CD4-positive, alpha-beta T cell (primary cell): ENCODE measurements at regions of chr20 and their contacts with region 1.

Region 1: DNA sequence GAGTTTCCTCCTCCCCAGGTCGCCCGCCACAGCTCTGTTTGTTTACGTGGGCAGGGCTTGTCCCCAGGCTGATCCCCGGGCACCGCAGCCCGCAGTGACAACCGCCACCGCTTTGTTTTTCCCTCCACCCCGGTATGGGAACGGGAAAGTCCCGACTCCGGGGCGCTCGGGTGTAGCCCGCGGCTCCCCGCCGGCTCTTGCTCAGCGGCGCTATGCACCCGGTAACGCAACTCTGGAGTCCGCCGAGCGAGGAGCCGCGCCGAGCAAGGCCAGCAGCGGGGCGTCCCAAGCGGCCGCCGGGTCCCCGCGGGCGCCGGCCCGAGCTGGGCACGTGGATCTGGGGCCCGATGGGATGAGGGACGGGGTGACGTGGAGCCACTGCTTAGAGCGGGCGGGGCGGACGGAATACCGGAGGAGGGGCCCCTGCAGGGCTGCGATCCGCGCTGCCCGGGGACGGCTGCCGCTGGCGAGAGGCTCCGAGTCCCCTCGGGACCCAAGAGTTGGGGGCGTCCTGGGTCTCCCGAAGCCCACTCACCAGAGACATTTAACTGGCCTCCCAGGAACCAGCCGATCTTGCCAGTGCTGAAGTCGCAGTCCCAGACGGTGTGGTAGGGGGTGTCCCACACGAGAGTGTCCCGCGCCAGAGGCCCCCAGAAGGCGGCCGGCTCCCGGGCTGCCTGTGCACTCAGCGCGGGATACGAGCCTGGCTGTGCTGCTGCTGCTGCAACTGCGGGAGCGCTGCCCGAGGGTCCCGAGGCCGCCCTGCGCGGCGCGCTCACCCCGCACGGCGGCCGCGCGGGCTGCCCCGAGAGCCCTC is 497 bp downstream of the ACSS1 start:
- DNase-seq: peak; percentile 45 to 94 (median 71)
- ATAC-seq: peak; percentile 45
- H3K4me3 ChIP-seq: peak overlapping the region; percentile 94
- H3K4me3 Mint-ChIP-seq: peak overlapping the region; percentile 88
- H3K27ac ChIP-seq: peak overlapping the region; percentile 86 to 89
- H3K27ac Mint-ChIP-seq: peak overlapping the region; percentile 88
- H3K4me1 ChIP-seq: peaks cover 55% of the 10 kb centered on the region
- H3K4me1 Mint-ChIP-seq: peaks cover 63% of the 10 kb centered on the region
- H3K27me3 ChIP-seq: no peaks in the 10 kb centered on the region
- H3K27me3 Mint-ChIP-seq: no peaks in the 10 kb centered on the region
- CTCF ChIP-seq: no peak

Region 2: DNA sequence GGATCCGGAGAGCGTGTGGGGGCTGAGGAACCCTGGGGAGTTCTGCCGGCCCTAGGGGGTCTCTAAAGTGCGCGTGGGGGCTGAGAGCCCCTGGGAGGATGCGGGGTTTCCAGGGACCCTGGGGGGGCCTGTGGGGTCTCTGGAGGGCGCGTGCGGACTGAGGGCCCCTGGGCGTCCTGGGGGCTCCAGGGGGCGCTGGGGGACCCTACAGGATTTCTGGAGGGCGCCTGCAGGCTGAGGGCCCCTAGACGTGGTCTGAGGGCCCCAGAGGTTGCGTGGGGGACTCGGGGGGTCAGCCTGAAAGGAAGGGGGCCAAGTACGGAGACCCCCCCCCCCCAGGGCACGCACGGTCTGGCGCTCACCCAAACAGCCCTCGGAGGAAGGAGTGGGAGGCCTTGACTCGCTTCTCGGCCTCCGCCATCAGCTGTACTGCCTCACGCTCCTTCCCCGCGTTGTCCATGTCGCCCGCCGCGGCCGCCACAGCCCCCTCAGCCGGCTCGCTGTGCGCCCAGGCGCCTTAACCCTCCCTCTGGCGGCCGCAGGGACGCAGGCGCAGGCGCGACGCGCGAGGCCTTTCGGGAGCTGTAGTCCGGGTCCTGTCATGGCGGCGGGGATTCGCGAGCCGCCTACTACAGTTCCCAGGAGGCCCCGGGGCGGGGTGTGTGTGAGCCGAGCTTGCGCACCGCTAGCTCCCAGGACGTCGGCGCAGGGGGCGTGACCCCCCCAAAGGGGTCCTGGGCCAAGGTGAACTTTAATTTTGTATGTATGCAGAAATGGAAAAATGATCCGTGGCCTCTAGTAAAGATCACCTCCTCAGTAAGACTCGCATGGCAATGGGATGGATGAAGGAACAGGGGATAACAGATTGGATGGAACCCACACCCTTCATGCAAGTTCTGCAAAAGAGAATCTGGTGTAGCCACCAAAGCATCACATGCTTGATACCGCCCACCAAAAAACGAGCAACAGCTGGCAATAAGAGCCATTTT is 1636.2 kb before region 1 on chr20 and contains the start of gene NAPB:
- CTCF ChIA-PET with region 1: no interaction called
- POLR2A ChIA-PET with region 1: no interaction called
- intact Hi-C with region 1: loop called in 1 of 2 experiments (anchors 10 kb)
- DNase-seq: peak; percentile 86 to 95 (median 92)
- ATAC-seq: peak; percentile 99
- H3K4me3 ChIP-seq: peak within 1 kb of the TSS; percentile 97
- H3K4me3 Mint-ChIP-seq: peak within 1 kb of the TSS; percentile 93
- H3K27ac ChIP-seq: peak within 1 kb of the TSS; percentile 36 to 49
- H3K27ac Mint-ChIP-seq: peak within 1 kb of the TSS; percentile 85
- H3K4me1 ChIP-seq: peaks cover 14% of the 10 kb centered on the region
- H3K4me1 Mint-ChIP-seq: peaks cover 40% of the 10 kb centered on the region
- H3K27me3 ChIP-seq: no peaks in the 10 kb centered on the region
- H3K27me3 Mint-ChIP-seq: peaks cover 14% of the 10 kb centered on the region
- CTCF ChIP-seq: peak; percentile 48
- total RNA-seq, gene NAPB: 7.5 to 8.9 TPM

Region 3: DNA sequence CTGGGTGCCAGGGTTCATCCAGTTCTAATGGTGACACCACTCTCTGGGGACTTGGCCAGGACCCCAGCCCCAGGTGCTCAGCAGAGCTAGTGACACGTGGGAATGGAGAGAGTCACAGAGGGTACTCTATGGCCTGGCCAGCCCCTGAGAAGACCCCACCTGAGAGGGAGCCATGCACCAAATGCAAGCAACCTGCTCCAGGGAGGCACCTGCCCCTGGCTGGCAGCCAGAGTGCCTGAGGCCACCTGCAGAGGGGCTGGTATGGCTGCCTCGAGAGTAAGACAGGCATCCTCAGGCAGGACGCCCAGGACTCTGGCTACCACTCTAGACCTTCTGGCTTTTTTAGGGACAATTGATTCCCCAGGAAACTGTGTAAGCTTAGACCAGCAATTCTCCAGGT is 147.0 kb before region 1 on chr20:
- CTCF ChIA-PET with region 1: no interaction called
- POLR2A ChIA-PET with region 1: no interaction called
- intact Hi-C with region 1: no loop called
- DNase-seq: no peak
- ATAC-seq: no peak
- H3K4me3 ChIP-seq: no peak overlapping the region
- H3K4me3 Mint-ChIP-seq: no peak overlapping the region
- H3K27ac ChIP-seq: no peak overlapping the region
- H3K27ac Mint-ChIP-seq: no peak overlapping the region
- H3K4me1 ChIP-seq: no peaks in the 10 kb centered on the region
- H3K4me1 Mint-ChIP-seq: no peaks in the 10 kb centered on the region
- H3K27me3 ChIP-seq: no peaks in the 10 kb centered on the region
- H3K27me3 Mint-ChIP-seq: no peaks in the 10 kb centered on the region
- CTCF ChIP-seq: no peak

Region 4: GRCh38 chr20:24942679-24943078 is 114.8 kb before region 1 on chr20:
- CTCF ChIA-PET with region 1: no interaction called
- POLR2A ChIA-PET with region 1: no interaction called
- intact Hi-C with region 1: no loop called
- DNase-seq: no peak
- ATAC-seq: no peak
- H3K4me3 ChIP-seq: no peak overlapping the region
- H3K4me3 Mint-ChIP-seq: no peak overlapping the region
- H3K27ac ChIP-seq: no peak overlapping the region
- H3K27ac Mint-ChIP-seq: no peak overlapping the region
- H3K4me1 ChIP-seq: no peaks in the 10 kb centered on the region
- H3K4me1 Mint-ChIP-seq: no peaks in the 10 kb centered on the region
- H3K27me3 ChIP-seq: no peaks in the 10 kb centered on the region
- H3K27me3 Mint-ChIP-seq: no peaks in the 10 kb centered on the region
- CTCF ChIP-seq: no peak

Region 5: DNA sequence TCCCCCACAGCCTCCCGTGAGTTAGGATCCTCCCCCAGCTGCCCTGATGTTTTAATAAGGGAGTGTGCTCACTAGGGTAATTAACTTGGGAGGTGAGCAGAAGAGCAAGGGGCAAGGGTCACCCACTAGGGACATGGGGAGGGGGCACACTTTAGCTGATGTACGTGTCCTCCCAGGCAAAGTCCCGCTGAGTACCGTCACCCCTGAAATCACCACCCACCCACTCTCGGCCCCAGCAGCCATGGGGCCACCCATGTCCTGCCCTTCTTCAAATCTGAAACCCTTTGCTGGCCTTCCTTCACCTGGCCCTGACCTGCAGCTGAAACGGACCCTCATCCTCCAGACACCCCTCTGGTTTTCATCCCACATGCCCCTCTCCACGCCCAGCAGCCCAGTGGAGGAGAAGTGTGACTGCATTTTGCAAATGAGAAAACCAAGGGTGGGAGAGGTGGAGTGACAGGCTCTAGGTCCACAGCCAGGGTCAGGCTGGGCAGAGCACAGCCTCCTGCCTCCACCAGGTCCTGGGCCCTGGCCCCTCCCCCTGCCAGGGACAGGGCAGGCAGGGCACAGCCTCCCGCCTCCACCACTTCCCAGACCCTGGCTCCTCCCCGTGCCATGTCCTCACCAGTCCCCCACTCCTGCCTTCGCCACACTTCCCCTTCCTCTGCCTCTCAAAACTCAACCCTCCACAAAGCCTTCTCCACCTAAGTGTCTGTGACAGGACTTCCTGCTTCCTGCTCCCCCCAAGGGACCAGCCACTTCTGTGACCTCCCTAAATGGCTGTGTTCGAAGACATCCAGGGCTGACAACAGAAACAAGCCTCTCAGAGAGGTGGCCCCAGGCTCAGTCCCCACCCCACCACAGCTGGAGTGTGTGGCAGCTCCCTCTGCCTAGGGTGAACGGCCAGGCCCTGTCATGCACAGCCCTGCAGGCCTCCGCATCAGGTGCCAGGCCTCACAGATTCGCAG is 14.6 kb before region 1 on chr20:
- CTCF ChIA-PET with region 1: interaction called, 3 read pairs
- POLR2A ChIA-PET with region 1: interaction called, 34 read pairs
- intact Hi-C with region 1: no loop called
- DNase-seq: peak in 13 of 14 experiments; percentile 14 to 73 (median 39)
- ATAC-seq: peak; percentile 86
- H3K4me3 ChIP-seq: no peak overlapping the region
- H3K4me3 Mint-ChIP-seq: peak overlapping the region; percentile 80
- H3K27ac ChIP-seq: peak overlapping the region; percentile 78 to 80
- H3K27ac Mint-ChIP-seq: peak overlapping the region; percentile 95
- H3K4me1 ChIP-seq: peaks cover 59% of the 10 kb centered on the region
- H3K4me1 Mint-ChIP-seq: peaks cover 56% of the 10 kb centered on the region
- H3K27me3 ChIP-seq: no peaks in the 10 kb centered on the region
- H3K27me3 Mint-ChIP-seq: no peaks in the 10 kb centered on the region
- CTCF ChIP-seq: no peak

Region 6: DNA sequence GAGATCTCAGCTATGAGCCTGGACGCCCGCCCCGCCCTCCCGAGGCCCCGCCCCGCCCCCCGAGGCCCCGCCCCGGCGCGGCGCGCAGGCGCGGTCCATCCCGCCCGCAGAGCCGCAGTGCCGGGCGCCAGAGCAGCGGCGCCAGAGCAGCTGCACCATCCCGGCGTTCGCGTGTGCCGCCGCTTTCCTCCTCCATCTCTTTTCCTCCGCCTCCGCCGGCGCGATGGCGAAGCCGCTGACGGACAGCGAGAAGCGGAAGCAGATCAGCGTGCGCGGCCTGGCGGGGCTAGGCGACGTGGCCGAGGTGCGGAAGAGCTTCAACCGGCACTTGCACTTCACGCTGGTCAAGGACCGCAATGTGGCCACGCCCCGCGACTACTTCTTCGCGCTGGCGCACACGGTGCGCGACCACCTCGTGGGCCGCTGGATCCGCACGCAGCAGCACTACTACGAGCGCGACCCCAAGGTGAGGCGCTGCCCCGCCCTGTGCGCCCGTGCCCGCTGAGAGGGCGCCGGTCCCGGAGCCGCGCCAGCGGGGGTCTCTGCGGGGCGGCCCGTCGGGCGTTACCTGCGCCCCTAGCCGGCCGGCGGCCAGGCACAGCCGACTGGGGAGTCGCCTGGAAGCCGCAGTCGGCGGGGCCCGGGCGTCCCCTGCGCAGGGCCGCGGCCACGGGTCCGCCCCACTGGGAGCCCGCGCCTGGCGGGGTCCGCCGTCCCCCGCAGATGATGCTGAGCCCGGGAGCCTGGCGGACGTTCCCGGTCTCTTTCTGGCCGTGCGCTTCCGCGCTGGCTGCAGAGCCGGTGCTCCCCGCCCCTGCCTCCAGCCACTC is 190.7 kb after region 1 on chr20 and contains the start of gene PYGB:
- CTCF ChIA-PET with region 1: no interaction called
- POLR2A ChIA-PET with region 1: interaction called, 11 read pairs
- intact Hi-C with region 1: loop called in 1 of 2 experiments (anchors 5 kb)
- DNase-seq: peak; percentile 59 to 90 (median 72)
- ATAC-seq: peak; percentile 86
- H3K4me3 ChIP-seq: peak within 1 kb of the TSS; percentile 94
- H3K4me3 Mint-ChIP-seq: peak within 1 kb of the TSS; percentile 95
- H3K27ac ChIP-seq: no peak within 1 kb of the TSS
- H3K27ac Mint-ChIP-seq: peak within 1 kb of the TSS; percentile 80
- H3K4me1 ChIP-seq: peaks cover 29% of the 10 kb centered on the region
- H3K4me1 Mint-ChIP-seq: peaks cover 56% of the 10 kb centered on the region
- H3K27me3 ChIP-seq: no peaks in the 10 kb centered on the region
- H3K27me3 Mint-ChIP-seq: peaks cover 6% of the 10 kb centered on the region
- CTCF ChIP-seq: no peak
- total RNA-seq, gene PYGB: 26.3 to 27.5 TPM